ENCODE measurements at regions of chr7 and their contacts with region 1.

Region 1: GRCh38 chr7:150404805-150405583 is 25.9 kb downstream of the ZNF775 start:
- DNase-seq: peak; percentile 78
- ATAC-seq: peak; percentile 36
- H3K4me3 Mint-ChIP-seq: peak overlapping the region; percentile 91
- H3K27ac Mint-ChIP-seq: peak overlapping the region; percentile 99
- H3K4me1 Mint-ChIP-seq: peaks cover 73% of the 10 kb centered on the region
- H3K27me3 Mint-ChIP-seq: no peaks in the 10 kb centered on the region
- CTCF ChIP-seq: no peak

Region 2: DNA sequence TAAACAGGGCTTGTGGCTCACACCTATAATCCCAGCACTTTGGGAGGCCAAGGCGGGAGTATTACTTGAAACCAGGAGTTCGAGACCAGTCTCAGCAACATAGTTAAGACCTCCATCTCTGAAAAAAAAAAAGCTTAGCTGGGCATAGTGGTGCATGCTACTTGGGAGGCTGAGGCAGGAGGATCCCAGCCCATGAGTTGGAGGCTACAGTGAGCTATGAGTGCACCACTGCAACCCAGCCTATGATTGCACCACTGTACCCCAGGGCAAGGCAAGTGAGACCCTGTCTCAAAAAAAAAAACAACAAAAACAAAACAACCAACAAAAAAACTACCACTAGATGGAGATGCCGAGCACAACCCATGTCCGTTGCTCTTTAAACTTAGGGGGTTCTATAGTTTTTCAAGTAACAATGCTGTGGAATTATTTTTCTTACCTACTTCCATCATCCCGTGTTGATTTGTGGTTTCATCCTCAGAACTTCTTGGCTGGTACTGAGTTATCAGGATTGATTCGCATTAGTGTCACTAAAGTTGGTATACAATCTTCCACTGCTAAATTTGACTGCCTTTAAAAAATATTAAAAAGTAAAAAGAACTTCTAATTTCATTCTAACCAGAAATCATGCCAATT is 48.6 kb before region 1 on chr7:
- CTCF ChIA-PET with region 1: interaction called, 19 read pairs
- POLR2A ChIA-PET with region 1: interaction called, 421 read pairs
- intact Hi-C with region 1: loop called (anchors 1 kb)
- DNase-seq: no peak
- ATAC-seq: peak; percentile 57
- H3K4me3 Mint-ChIP-seq: no peak overlapping the region
- H3K27ac Mint-ChIP-seq: no peak overlapping the region
- H3K4me1 Mint-ChIP-seq: peaks cover 16% of the 10 kb centered on the region
- H3K27me3 Mint-ChIP-seq: no peaks in the 10 kb centered on the region
- CTCF ChIP-seq: peak; percentile 31

Region 3: GRCh38 chr7:150378853-150379440 is 26.0 kb before region 1 on chr7 and contains the start of gene ZNF775:
- CTCF ChIA-PET with region 1: interaction called, 9 read pairs
- POLR2A ChIA-PET with region 1: interaction called, 421 read pairs
- intact Hi-C with region 1: loop called (anchors 1 kb)
- DNase-seq: peak; percentile 90
- ATAC-seq: peak; percentile 93
- H3K4me3 Mint-ChIP-seq: peak within 1 kb of the TSS; percentile 90
- H3K27ac Mint-ChIP-seq: peak within 1 kb of the TSS; percentile 88
- H3K4me1 Mint-ChIP-seq: peaks cover 80% of the 10 kb centered on the region
- H3K27me3 Mint-ChIP-seq: no peaks in the 10 kb centered on the region
- CTCF ChIP-seq: no peak
- total RNA-seq, gene ZNF775: 8.0 and 8.8 TPM in 2 replicates

Region 4: GRCh38 chr7:150420987-150421674 is 16.1 kb after region 1 on chr7:
- CTCF ChIA-PET with region 1: interaction called, 12 read pairs
- POLR2A ChIA-PET with region 1: interaction called, 9 read pairs
- intact Hi-C with region 1: loop called (anchors 1 kb)
- DNase-seq: peak; percentile 69
- ATAC-seq: peak; percentile 98
- H3K4me3 Mint-ChIP-seq: peak overlapping the region; percentile 47
- H3K27ac Mint-ChIP-seq: peak overlapping the region; percentile 19
- H3K4me1 Mint-ChIP-seq: peaks cover 7% of the 10 kb centered on the region
- H3K27me3 Mint-ChIP-seq: peaks cover 7% of the 10 kb centered on the region
- CTCF ChIP-seq: peak; percentile 94

Region 5: DNA sequence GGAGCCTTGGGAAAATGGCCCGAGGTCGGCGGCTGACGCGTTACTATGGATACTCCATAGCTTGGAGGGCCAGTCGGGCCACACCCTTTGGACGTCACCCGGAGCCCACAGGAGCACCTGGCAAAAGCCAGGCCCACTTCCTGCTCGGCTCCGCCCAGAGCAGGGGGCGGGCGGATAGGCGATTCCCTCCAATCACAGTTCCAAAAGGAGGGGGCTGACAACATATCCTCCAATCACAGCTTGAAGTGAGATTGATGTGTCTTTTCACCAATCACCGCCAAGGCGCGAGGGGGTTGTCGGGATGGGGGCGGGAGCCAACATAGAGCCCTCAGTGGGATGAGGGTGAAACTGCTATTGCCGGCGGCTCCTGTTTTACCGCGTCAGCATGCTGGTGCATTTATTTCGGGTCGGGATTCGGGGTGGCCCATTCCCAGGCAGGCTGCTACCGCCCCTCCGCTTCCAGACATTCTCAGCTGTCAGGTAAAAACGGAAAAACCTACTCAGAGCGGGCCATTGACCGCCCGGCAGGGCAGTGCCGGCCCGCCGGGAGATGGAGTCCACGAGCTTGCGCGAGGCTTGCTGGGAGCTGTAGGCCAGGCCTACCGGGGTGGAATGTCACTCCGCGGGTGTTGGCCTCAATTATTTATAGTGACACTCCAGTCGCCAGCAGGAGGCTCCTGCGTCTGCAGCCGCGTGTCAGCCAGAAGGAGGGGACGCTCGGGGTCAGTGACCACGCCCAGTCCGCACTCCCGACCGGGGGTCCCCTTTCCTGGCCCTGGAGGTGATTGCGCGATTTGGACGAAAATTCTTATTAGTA is 623.3 kb after region 1 on chr7 and contains the start of gene ABCB8:
- CTCF ChIA-PET with region 1: no interaction called
- POLR2A ChIA-PET with region 1: interaction called, 3 read pairs
- intact Hi-C with region 1: loop called (anchors 5 kb)
- DNase-seq: peak; percentile 94
- ATAC-seq: peak; percentile 93
- H3K4me3 Mint-ChIP-seq: peak within 1 kb of the TSS; percentile 96
- H3K27ac Mint-ChIP-seq: peak within 1 kb of the TSS; percentile 97
- H3K4me1 Mint-ChIP-seq: peaks cover 22% of the 10 kb centered on the region
- H3K27me3 Mint-ChIP-seq: peaks cover 9% of the 10 kb centered on the region
- CTCF ChIP-seq: no peak
- total RNA-seq, gene ABCB8: 38.9 and 46.5 TPM in 2 replicates

Region 6: DNA sequence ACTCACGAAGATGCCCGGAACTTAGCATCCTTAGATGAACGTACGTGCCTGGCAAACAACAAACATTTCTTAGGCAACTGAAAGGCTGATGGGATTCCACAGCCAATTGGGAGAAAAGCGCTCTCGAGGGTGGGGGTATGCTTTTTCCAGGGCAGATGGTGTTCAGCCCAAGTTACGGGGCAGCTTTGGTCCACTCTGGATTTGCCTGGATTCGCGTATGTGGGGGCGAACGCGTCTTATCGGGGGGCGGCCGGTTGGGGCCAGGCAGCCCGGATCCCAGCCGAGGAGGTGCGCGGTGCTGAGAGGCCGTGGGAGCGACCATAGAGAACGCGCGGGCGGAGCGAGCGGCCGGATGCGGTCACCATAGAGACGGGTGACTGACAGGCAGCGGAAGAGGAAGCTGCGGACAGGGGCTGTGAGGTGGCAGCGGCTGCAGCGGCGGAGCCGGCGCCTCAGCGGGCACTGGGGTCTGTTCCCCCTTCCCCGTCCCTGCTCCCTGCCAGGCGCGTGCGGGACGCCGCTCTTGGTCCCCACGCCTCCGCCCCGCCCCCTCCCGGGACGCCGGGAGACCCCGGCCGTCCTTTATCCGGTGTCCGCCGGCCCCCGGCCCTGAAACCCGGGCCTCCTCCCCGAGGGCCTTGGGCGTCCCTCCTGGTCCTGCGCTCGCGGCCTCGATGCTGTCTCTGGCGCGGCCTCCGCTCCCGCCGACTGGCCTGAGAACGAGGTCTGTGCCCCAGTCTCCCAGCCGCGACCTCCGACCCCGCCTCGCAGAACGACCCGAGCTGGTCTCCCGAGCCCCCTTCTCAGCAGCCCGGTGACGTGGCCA is 827.3 kb after region 1 on chr7 and contains the start of gene CHPF2:
- CTCF ChIA-PET with region 1: no interaction called
- POLR2A ChIA-PET with region 1: no interaction called
- intact Hi-C with region 1: loop called (anchors 5 kb)
- DNase-seq: peak; percentile 85
- ATAC-seq: peak; percentile 93
- H3K4me3 Mint-ChIP-seq: peak within 1 kb of the TSS; percentile 99
- H3K27ac Mint-ChIP-seq: peak within 1 kb of the TSS; percentile 96
- H3K4me1 Mint-ChIP-seq: peaks cover 35% of the 10 kb centered on the region
- H3K27me3 Mint-ChIP-seq: no peaks in the 10 kb centered on the region
- CTCF ChIP-seq: no peak
- total RNA-seq, gene CHPF2: 32.4 and 41.2 TPM in 2 replicates

Measured in activated B cell treated with CpG ODN at 0.5 μM for 24 hours (primary cell).